Head of caudate nucleus (tissue), 42 donors: ENCODE measurements at regions of chr14 and their contacts with region 1.

Region 1: DNA sequence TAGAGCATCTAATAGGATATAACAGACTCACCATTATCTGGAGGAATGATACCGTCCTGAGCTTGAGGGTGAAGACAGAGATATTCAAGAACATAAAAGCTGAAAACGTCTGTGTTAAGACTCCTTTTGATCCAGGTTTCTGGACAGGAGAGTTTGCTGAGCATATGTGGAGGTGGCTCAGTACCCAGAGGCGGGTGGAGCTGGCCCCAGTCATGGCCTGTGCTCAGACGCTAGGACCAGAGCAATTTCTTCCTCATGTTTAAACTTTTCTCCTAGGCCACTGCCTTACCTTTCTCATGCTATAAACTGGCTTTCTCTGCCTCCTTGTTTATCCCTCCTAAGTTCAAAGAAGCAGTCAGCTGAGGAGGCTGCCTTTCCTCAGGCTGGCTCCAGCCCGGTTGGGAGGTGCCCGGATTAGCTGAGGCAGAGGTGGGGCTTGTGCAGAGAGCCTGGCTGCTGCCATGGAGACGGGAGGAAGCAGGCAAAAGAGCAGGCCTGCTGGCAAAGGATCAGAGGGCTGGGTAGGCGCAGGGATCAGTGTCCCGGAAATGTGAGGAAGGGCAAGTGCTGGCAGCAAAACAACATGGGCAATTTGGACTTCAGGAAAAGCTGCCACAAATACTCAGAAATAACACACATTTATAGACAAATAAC is 13.7 kb downstream of the COA8 start:
- DNase-seq: peak; percentile 52 to 95 (median 83)

Region 2: GRCh38 chr14:103393676-103394626 is 182.5 kb before region 1 on chr14:
- intact Hi-C with region 1: no loop called
- DNase-seq: peak in 2 of 42 donors; percentile 16 to 62

Region 3: DNA sequence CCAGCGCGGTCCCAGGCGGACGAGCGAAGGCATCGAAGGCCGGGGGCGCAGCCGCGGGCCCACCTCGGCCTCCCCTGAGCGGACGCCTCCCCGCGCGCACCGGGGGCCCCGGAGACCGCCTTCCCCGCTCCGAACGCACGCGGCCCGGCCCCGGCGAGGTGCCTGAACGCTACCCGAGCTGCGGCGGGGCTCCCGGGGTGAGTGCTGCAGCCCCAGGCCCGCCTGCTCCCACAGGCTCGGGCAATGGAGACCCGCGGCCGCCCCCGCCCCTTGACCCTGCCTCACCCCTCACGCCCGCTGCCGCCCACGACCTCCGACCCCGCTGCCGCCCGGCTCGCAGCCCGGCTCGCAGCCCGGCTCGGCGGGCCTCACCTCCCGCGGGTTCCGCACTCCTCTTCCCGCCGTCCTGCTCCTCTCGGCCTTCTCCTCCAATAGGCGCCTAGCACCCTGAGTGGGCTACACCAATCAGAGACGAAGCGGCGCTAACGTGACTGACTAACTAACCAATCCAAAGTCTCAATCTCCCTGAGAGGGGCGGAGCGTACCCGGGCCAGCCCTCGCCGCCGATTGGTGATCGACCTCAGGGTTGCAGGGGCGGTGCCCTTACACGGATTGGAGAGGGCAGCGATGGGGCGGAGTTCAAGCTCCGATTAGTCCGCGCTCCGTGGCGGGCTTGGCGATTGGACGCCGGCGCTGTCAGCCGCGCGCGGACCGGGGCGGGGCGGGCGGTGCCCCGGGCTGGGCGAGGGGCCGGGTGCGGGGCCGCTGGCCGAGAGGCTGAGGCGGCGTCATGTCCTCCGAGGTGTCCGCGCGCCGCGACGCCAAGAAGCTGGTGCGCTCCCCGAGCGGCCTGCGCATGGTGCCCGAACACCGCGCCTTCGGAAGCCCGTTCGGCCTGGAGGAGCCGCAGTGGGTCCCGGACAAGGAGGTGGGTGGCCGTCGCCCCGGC is 138.8 kb after region 1 on chr14 and contains the starts of genes XRCC3 and ZFYVE21:
- intact Hi-C with region 1: loop called (anchors 10 kb)
- DNase-seq: peak; percentile 97 to 100 (median 99)